Activated CD8-positive, alpha-beta T cell treated with anti-CD3 and anti-CD28 coated beads for 36 hours (primary cell): ENCODE measurements at regions of chr1 and their contacts with region 1.

Region 1: DNA sequence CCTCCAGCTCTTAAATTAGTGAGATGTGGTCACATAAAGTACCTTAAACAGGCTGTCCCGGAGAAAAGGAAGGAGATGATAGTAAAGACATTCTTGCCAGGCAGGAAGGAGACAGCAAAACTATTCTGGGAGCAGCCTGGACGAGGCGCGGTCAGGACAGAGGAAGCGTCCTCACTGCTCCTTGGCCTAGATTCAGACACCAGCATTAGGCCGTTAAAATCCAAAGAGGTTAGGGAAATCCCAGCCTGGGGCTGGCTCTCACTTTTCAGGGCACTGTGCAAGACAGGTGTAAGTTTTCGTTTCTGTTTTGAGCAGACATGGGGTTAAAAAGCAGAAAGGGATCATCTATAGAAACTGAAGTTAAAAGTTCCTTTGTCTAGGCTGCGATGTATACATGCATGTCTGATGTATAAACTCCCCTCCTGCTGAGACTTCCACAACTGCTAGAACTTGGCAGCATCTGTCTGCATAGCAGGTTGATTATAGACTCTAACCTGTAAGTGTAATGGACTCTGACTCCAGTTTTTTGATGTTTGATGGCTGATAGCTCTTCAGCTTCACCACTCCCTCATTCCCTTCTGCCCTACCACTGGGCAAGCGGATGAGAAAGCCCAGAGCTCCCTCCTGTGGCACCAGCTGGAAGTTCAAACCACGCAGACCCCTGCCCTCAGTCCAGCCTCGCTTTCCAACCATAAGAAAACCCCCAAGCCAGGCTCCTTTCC is 21.5 kb downstream of the STPG1 start:
- DNase-seq: peak; percentile 75
- ATAC-seq: peak; percentile 80
- H3K4me3 Mint-ChIP-seq: peak overlapping the region; percentile 59
- H3K27ac Mint-ChIP-seq: peak overlapping the region; percentile 95
- H3K4me1 Mint-ChIP-seq: peaks cover 41% of the 10 kb centered on the region
- H3K27me3 Mint-ChIP-seq: no peaks in the 10 kb centered on the region
- CTCF ChIP-seq: peak; percentile 84

Region 2: DNA sequence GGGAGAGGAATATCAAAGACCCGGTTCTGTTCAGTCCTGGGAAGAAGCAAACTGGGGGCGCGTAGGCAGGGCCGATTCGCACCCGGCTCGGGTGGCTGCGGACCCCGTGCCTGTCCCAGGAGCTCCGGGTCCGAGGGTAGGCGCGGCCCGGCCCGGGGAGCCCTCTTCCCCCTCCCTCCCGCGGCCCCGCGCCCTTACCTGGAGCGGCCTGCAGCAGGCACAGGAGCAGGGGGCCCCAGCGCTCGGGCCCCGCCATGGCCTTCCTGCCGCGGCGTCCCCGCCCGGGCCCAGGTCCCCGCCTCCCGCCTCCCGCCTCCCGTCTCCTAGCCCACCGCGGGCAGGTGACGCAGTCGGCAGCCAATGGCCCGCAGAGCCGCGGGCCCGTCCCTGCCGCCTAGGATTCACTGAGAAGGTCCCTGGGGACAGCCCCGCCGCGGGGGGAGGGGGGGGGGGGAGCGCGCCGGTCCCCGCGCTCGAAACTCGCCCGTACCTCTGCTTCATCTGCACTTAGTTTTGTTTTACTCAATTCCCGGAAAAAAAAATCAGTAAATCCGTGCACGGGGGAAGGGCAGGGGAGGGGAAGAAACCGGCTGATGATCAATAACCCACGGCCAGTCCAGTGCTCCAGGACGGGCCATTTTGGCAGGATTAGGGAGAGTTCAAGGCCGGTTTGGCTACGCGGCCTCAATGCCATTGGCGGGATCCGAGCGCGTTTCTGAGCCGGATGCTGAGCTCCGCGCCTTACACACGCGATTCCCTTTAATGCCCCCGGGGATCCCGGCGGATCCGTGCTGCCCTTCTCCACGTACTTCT is 204.8 kb before region 1 on chr1 and contains the start of gene IFNLR1:
- CTCF ChIA-PET with region 1: interaction called, 46 read pairs
- POLR2A ChIA-PET with region 1: interaction called, 5 read pairs
- intact Hi-C with region 1: no loop called
- DNase-seq: peak; percentile 91
- ATAC-seq: peak; percentile 90
- H3K4me3 Mint-ChIP-seq: peak within 1 kb of the TSS; percentile 78
- H3K27ac Mint-ChIP-seq: peak within 1 kb of the TSS; percentile 56
- H3K4me1 Mint-ChIP-seq: peaks cover 65% of the 10 kb centered on the region
- H3K27me3 Mint-ChIP-seq: no peaks in the 10 kb centered on the region
- CTCF ChIP-seq: no peak
- total RNA-seq, gene IFNLR1: 4.8 to 6.4 TPM

Region 3: DNA sequence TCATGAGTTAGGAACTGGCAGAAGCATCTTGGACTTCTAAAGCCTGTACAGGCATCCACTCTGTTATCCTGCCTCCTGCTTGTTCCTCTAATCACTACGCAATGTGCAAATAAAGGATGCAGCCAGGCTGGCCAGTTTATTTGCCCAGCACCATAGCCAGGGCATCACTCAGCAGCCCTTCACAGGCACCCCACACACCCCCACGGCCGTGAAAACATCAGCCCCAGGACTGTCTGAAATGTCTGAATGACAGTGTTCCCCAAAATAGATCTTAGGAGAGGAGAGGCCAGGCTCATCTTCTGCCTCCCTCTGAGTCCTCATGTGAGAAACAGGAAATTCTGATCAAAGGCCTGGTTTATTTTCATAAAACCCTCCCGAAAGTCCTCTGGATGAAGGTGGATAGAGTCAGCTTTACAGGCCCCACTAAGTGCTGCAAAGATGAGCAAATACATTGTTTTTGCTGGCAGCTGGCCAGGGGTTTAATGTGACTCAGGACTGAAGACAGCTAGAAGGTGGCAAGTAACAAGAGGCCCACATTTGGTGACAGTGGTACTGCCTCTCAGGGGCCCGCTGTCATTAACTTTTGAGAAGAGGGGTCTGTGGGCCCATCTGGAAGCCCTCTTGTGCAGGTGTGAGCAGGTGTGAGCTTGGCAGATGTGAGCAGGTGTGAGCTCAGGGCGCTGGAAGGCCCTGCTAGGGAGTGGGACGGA is 40.0 kb before region 1 on chr1:
- CTCF ChIA-PET with region 1: interaction called, 20 read pairs
- POLR2A ChIA-PET with region 1: no interaction called
- intact Hi-C with region 1: no loop called
- DNase-seq: peak; percentile 86
- ATAC-seq: peak; percentile 45
- H3K4me3 Mint-ChIP-seq: no peak overlapping the region
- H3K27ac Mint-ChIP-seq: no peak overlapping the region
- H3K4me1 Mint-ChIP-seq: peaks cover 37% of the 10 kb centered on the region
- H3K27me3 Mint-ChIP-seq: peaks cover 1% of the 10 kb centered on the region
- CTCF ChIP-seq: no peak

Region 4: GRCh38 chr1:24403806-24404205 is 11.8 kb after region 1 on chr1:
- CTCF ChIA-PET with region 1: interaction called, 35 read pairs
- POLR2A ChIA-PET with region 1: interaction called, 3 read pairs
- intact Hi-C with region 1: no loop called
- DNase-seq: no peak
- ATAC-seq: no peak
- H3K4me3 Mint-ChIP-seq: no peak overlapping the region
- H3K27ac Mint-ChIP-seq: no peak overlapping the region
- H3K4me1 Mint-ChIP-seq: peaks cover 8% of the 10 kb centered on the region
- H3K27me3 Mint-ChIP-seq: no peaks in the 10 kb centered on the region
- CTCF ChIP-seq: no peak

Region 5: GRCh38 chr1:24486331-24487065 is 94.5 kb after region 1 on chr1:
- CTCF ChIA-PET with region 1: interaction called, 18 read pairs
- POLR2A ChIA-PET with region 1: no interaction called
- intact Hi-C with region 1: no loop called
- DNase-seq: no peak
- ATAC-seq: peak; percentile 24
- H3K4me3 Mint-ChIP-seq: peak overlapping the region; percentile 70
- H3K27ac Mint-ChIP-seq: peak overlapping the region; percentile 93
- H3K4me1 Mint-ChIP-seq: peaks cover 76% of the 10 kb centered on the region
- H3K27me3 Mint-ChIP-seq: no peaks in the 10 kb centered on the region
- CTCF ChIP-seq: no peak

Region 6: DNA sequence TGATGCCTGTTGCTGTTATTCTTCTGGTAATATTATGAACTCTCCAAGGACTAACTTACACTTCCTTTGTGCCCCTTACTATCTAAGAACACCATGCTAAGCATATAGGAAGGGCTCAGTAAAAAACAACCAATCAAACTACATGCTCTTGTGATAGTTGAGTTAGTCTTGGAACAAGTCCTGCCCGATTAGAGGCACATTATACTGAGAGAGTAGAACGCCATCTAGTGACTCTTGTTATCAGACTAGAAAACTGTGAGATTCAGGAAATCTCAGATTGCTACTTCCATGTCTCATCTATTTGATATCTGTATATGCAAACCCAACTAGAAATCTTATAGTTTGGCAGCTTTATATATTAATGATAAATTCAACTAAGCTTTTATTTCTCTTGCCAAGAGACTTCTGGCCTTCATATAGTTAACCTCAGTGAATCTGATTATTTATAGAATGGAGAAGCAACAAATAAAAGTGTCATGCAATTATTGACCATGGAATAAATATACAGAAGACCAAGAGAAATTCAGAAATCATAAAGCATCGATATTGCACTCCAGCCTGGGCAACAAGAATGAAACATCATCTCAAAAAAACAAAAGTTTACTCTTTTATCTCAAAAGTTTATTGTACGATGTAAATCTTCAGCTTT is 243.3 kb after region 1 on chr1:
- CTCF ChIA-PET with region 1: interaction called, 20 read pairs
- POLR2A ChIA-PET with region 1: no interaction called
- intact Hi-C with region 1: no loop called
- DNase-seq: no peak
- ATAC-seq: peak; percentile 83
- H3K4me3 Mint-ChIP-seq: no peak overlapping the region
- H3K27ac Mint-ChIP-seq: no peak overlapping the region
- H3K4me1 Mint-ChIP-seq: peaks cover 10% of the 10 kb centered on the region
- H3K27me3 Mint-ChIP-seq: no peaks in the 10 kb centered on the region
- CTCF ChIP-seq: peak; percentile 66